Activated CD8-positive, alpha-beta T cell treated with anti-CD3 and anti-CD28 coated beads for 36 hours (primary cell): ENCODE measurements at regions of chr5 and their contacts with region 1.

Region 1: DNA sequence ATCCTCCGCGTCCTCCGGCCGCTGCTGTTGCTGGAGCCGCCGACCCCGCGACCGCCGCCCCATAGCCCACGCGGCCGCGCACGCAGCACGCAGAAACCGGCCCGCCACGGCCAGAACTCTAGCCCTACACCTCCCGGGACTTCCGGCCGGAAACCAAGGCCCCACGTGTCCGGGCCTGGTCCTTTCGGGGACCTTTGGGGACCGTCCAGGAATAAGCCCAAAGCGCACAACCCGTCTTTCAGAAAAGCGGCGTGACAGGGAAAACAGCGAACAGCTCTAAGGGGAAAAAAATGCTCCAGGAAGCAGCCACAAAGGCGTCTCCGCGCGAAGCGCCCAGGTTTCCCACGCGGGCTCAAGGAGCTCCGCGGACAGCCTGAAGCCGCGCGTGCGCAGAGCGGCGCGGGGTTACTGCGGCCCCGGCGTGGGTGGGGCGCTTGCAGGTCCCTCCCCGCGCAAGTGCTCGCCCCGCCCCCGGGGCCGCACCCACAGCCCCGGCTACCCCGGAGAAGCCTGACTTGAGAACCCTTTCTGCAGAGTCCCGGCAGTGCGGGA is at the starts of genes NSUN2 and SRD5A1:
- DNase-seq: peak; percentile 92
- ATAC-seq: peak; percentile 92
- H3K4me3 Mint-ChIP-seq: peak within 1 kb of the TSS; percentile 99
- H3K27ac Mint-ChIP-seq: peak within 1 kb of the TSS; percentile 98
- H3K4me1 Mint-ChIP-seq: peaks cover 43% of the 10 kb centered on the region
- H3K27me3 Mint-ChIP-seq: no peaks in the 10 kb centered on the region
- CTCF ChIP-seq: no peak
- total RNA-seq, gene NSUN2: 110 to 111 TPM
- total RNA-seq, gene SRD5A1: 10.6 to 12.4 TPM

Region 2: DNA sequence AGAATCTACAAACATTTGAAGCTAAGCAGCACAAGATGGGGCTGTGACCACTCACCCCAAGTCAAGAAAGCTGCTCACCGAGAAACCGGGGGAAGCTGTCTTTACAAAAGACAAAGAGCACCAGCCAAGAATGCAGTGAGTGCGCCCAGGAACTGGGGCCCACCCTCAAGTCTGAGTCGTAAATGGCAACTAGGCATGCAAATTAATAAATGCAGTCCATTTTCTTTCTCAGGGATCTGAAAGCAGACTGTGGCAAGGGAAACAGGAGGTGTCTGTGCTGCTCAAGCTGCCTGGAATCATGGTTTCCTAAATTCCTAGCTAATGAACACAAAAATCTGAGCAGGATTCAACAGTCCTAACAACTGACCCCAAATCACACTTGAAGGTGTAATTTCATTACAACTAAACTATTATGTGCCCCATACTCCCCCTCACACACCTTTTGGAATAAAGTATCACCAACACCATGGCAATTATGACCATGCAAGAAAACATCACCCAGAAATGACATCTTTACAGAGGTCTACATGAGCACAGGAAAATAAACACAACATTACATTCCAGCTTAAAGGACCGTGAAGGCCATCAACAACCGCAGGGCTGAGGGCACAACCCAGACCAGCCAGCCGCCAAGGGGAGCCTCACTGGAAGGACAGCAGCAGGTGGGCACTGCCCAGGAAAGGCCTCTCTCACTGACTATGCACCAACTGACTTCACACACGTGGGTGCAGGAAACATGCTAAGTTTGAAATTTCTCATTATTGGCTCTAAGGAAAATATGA is 17.8 kb before region 1 on chr5:
- CTCF ChIA-PET with region 1: interaction called, 3 read pairs
- POLR2A ChIA-PET with region 1: interaction called, 11 read pairs
- intact Hi-C with region 1: no loop called
- DNase-seq: no peak
- ATAC-seq: no peak
- H3K4me3 Mint-ChIP-seq: no peak overlapping the region
- H3K27ac Mint-ChIP-seq: peak overlapping the region; percentile 55
- H3K4me1 Mint-ChIP-seq: peaks cover 36% of the 10 kb centered on the region
- H3K27me3 Mint-ChIP-seq: no peaks in the 10 kb centered on the region
- CTCF ChIP-seq: no peak

Region 3: DNA sequence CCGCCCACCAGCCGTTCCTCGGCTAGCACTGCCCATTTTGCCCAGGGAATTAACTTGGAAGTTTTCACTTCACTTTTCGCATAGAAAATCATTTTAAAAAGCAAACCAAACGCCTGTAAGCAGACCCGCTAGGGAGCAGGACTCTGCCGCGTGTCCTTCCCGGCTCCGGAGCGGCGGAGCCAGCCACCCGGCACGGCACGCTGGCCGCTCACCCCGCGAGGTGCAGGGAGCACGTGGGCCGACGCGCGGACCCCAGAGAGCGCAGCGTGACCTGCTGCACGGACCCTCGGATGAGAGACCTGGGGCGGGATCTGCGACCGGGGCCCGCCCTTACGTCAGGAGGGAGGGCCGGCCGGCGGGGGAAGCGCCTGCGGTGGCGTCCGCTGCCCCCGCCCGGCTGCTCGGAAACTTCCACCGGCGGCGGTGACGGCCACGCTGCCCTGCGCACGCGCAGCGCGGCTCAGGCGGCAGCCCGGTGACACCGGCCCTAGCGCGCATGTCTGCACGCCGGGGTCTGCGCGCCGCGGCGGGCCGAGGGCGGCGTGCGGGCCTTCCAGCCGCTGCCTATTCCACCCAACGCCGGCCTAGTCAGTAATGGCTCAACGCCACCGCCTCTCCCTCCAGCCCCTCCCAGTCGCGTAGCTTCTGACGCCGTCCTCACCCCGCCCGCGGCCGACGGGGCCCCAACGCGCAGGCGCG is 79.7 kb after region 1 on chr5:
- CTCF ChIA-PET with region 1: no interaction called
- POLR2A ChIA-PET with region 1: interaction called, 22 read pairs
- intact Hi-C with region 1: loop called (anchors 5 kb)
- DNase-seq: peak; percentile 95
- ATAC-seq: peak; percentile 84
- H3K4me3 Mint-ChIP-seq: peak overlapping the region; percentile 82
- H3K27ac Mint-ChIP-seq: peak overlapping the region; percentile 95
- H3K4me1 Mint-ChIP-seq: peaks cover 29% of the 10 kb centered on the region
- H3K27me3 Mint-ChIP-seq: peaks cover 1% of the 10 kb centered on the region
- CTCF ChIP-seq: no peak

Region 4: GRCh38 chr5:6745706-6746222 is 112.8 kb after region 1 on chr5:
- CTCF ChIA-PET with region 1: interaction called, 26 read pairs
- POLR2A ChIA-PET with region 1: interaction called, 12 read pairs
- intact Hi-C with region 1: no loop called
- DNase-seq: no peak
- ATAC-seq: peak; percentile 82
- H3K4me3 Mint-ChIP-seq: no peak overlapping the region
- H3K27ac Mint-ChIP-seq: no peak overlapping the region
- H3K4me1 Mint-ChIP-seq: peaks cover 6% of the 10 kb centered on the region
- H3K27me3 Mint-ChIP-seq: no peaks in the 10 kb centered on the region
- CTCF ChIP-seq: peak; percentile 66

Region 5: DNA sequence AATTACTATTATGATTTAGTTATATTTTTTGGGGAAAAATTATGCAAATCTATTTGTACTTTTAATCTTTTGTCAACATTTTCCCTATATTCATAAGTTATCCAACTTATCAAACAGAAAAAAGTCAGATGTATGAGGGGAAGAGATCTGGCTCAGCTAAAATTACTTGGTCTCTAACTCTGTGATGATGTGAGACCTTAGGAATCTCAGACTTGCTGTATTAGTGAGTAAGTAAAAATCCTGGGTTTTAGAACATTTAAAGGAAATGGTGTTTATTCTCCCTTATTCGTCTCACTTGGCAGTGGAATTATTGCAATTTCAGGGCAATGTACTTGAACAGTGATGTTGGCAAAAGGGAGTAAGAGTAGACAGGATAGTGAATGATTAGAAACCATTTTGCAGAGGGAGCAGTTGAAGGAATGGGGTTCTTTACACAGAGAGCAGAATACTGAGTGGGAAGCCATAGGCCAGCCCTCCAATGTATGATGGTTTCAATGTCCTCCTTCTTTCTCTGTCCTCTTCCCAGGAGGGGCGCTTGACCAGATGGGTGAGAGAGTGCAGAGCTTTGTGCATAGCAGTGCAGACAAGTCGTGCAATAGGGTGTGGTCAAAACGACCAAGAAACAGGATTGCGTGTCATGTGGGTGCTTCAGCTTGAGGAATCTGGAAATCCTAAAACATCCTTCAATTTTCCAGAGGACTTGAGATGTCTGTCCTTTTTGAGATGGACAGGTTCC is 171.9 kb after region 1 on chr5:
- CTCF ChIA-PET with region 1: no interaction called
- POLR2A ChIA-PET with region 1: no interaction called
- intact Hi-C with region 1: no loop called
- DNase-seq: no peak
- ATAC-seq: no peak
- H3K4me3 Mint-ChIP-seq: no peak overlapping the region
- H3K27ac Mint-ChIP-seq: no peak overlapping the region
- H3K4me1 Mint-ChIP-seq: no peaks in the 10 kb centered on the region
- H3K27me3 Mint-ChIP-seq: peaks cover 3% of the 10 kb centered on the region
- CTCF ChIP-seq: no peak